ENCODE measurements at regions of chr3 and their contacts with region 1.

Region 1: GRCh38 chr3:122942937-122943827 is 84.4 kb downstream of the SEMA5B start:
- DNase-seq: peak; percentile 44 to 86 (median 74)
- ATAC-seq: peak; percentile 96
- H3K4me3 ChIP-seq: no peak overlapping the region
- H3K27ac ChIP-seq: no peak overlapping the region
- H3K4me1 ChIP-seq: peaks cover 0 to 7% of the 10 kb centered on the region in 2 donors
- H3K27me3 ChIP-seq: no peaks in the 10 kb centered on the region
- CTCF ChIP-seq: peak; percentile 87 to 91

Region 2: GRCh38 chr3:123028233-123028828 is 85.1 kb after region 1 on chr3:
- intact Hi-C with region 1: loop called in 1 of 2 experiments (anchors 10 kb)
- DNase-seq: peak in 2 of 4 donors; percentile 71 to 82
- ATAC-seq: peak; percentile 79
- H3K4me3 ChIP-seq: peak overlapping the region; percentile 33 to 45
- H3K27ac ChIP-seq: no peak overlapping the region
- H3K4me1 ChIP-seq: peaks cover 14 to 26% of the 10 kb centered on the region in 2 donors
- H3K27me3 ChIP-seq: peaks cover 33 to 85% of the 10 kb centered on the region in 2 donors
- CTCF ChIP-seq: peak in 1 of 2 donors; percentile 38

Region 3: GRCh38 chr3:123152687-123153086 is 209.5 kb after region 1 on chr3:
- intact Hi-C with region 1: no loop called
- DNase-seq: no peak
- ATAC-seq: no peak
- H3K4me3 ChIP-seq: no peak overlapping the region
- H3K27ac ChIP-seq: no peak overlapping the region
- H3K4me1 ChIP-seq: peaks cover 0 to 8% of the 10 kb centered on the region in 2 donors
- H3K27me3 ChIP-seq: no peaks in the 10 kb centered on the region
- CTCF ChIP-seq: no peak

Region 4: GRCh38 chr3:123258811-123259420 is 315.7 kb after region 1 on chr3:
- intact Hi-C with region 1: loop called in 1 of 2 experiments (anchors 10 kb)
- DNase-seq: peak in 2 of 4 donors; percentile 29 to 61
- ATAC-seq: peak; percentile 79
- H3K4me3 ChIP-seq: no peak overlapping the region
- H3K27ac ChIP-seq: no peak overlapping the region
- H3K4me1 ChIP-seq: no peaks in the 10 kb centered on the region
- H3K27me3 ChIP-seq: no peaks in the 10 kb centered on the region
- CTCF ChIP-seq: peak; percentile 21 to 44

Measured in left lung (tissue), 14 donors.